Panc1 (cell line): ENCODE measurements at regions of chr10 and their contacts with region 1.

Region 1: DNA sequence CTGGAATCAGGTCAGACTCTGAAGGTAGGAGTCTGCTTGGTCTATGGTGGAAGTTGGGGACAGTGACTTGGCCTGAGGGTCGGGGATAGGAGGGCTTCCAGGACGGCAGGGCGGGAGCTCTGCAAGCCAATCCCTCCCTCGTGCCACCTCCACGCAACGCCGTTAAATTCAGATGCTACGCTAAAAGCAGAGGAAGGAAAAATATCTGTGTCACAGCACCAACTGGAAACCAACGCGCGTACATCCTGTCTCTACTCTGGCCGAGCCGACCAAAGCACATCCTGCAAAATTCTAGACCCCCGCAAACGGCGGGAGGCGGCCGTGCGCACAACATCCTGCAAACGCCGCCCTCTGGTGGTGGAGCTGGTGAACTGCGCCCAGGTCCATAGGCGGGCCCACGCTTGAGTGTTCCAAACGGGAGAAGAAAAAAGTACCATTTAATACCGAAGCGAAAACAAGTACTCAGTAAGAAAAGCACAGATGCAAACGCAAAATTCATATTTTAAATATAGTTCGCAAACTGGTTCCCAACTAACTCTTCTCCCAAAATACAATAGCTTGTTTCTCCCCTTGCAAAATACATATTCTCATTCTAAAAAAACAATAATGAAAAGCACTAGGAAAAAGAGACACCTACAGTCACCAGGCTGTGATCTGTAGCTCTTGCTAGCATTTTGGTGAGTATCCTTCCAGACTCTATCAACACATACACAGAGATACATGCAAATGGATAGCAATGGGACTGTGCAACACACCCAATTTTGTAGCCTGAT is 45.7 kb upstream of the HSPA12A start:
- DNase-seq: no peak
- ATAC-seq: peak; percentile 85
- H3K4me3 ChIP-seq: peak overlapping the region; percentile 28 to 45
- H3K27ac ChIP-seq: no peak overlapping the region
- H3K4me1 ChIP-seq: no peaks in the 10 kb centered on the region
- H3K27me3 ChIP-seq: no peaks in the 10 kb centered on the region
- CTCF ChIP-seq: peak; percentile 99

Region 2: DNA sequence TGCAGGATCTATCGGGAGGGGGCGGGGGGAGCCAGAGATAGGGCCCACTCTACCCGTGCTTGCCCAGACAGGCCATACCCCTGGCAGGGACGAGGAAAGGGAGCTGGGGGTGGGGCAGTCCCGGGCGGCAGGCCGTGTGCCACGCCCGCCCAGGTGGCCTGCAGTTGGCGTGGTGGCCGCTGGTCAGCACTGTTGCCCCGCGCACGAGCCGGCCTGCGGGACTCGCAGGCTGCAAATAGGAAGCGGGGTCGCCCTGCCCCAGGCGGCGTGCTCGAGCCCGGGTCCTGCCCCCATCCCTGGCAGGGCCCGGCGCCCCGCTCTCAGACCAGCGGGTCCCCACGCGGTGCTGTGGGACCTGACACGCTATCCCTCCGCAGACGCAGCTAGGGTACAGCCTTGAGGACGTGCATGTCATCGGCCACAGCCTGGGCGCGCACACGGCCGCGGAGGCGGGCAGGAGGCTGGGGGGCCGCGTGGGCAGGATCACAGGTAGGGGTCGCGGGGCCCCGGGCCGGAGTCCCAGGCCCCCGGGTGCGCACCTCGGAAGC is 160.6 kb before region 1 on chr10:
- CTCF ChIA-PET with region 1: interaction called, 16 read pairs
- POLR2A ChIA-PET with region 1: no interaction called
- in situ Hi-C with region 1: no loop called
- intact Hi-C with region 1: loop called (anchors 2 kb)
- DNase-seq: no peak
- ATAC-seq: peak; percentile 92
- H3K4me3 ChIP-seq: peak overlapping the region; percentile 21 to 25; a peak in 3 of 4 replicates
- H3K27ac ChIP-seq: no peak overlapping the region
- H3K4me1 ChIP-seq: no peaks in the 10 kb centered on the region
- H3K27me3 ChIP-seq: peaks cover 14% of the 10 kb centered on the region
- CTCF ChIP-seq: peak; percentile 95

Region 3: GRCh38 chr10:116690356-116691322 is 97.4 kb before region 1 on chr10:
- CTCF ChIA-PET with region 1: interaction called, 11 read pairs
- POLR2A ChIA-PET with region 1: no interaction called
- in situ Hi-C with region 1: no loop called
- intact Hi-C with region 1: no loop called
- DNase-seq: no peak
- ATAC-seq: peak; percentile 54
- H3K4me3 ChIP-seq: no peak overlapping the region
- H3K27ac ChIP-seq: no peak overlapping the region
- H3K4me1 ChIP-seq: no peaks in the 10 kb centered on the region
- H3K27me3 ChIP-seq: no peaks in the 10 kb centered on the region
- CTCF ChIP-seq: peak; percentile 64

Region 4: DNA sequence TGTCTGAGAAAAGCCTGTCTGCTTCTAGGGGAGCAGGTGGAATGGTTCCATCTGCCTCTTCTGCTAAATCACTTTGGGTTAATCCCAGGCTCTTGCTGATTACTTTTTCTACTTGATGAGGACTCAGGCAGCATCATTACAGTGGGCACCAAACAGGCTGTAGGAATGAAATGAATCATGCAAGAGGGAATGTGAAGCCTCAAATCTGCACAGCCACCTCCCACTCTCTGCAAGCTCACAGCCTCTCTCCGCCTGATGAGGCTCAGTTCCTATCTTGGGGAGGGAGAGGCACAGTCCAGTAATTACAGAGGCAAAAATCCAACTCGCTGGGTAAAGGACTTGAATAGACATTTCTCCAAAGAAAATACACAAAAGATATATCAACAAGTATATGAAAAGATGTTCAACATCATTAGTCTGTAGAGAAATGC is 79.7 kb before region 1 on chr10:
- CTCF ChIA-PET with region 1: no interaction called
- POLR2A ChIA-PET with region 1: no interaction called
- in situ Hi-C with region 1: no loop called
- intact Hi-C with region 1: no loop called
- DNase-seq: no peak
- ATAC-seq: no peak
- H3K4me3 ChIP-seq: no peak overlapping the region
- H3K27ac ChIP-seq: no peak overlapping the region
- H3K4me1 ChIP-seq: no peaks in the 10 kb centered on the region
- H3K27me3 ChIP-seq: no peaks in the 10 kb centered on the region
- CTCF ChIP-seq: no peak

Region 5: DNA sequence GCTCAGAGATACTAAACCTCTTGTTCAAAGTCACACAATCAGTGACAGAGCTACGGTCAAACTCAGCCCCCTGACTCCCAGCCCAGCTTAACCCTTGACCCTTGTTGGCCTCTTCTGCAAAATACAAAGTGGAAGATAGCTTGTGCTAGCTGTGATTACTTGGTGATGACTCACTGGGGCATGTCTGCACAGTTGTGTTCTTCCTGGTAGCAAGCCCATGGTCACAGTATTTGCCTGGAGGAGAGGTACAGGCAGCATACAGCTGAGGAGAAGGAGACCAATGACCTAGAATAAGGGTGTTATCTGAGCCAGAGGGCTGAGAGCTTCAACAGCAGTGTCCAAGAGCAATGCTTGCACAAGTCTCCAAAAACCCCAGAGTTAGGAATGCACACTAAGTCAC is 40.0 kb before region 1 on chr10:
- CTCF ChIA-PET with region 1: interaction called, 11 read pairs
- POLR2A ChIA-PET with region 1: no interaction called
- in situ Hi-C with region 1: no loop called
- intact Hi-C with region 1: no loop called
- DNase-seq: no peak
- ATAC-seq: no peak
- H3K4me3 ChIP-seq: no peak overlapping the region
- H3K27ac ChIP-seq: no peak overlapping the region
- H3K4me1 ChIP-seq: peaks cover 4% of the 10 kb centered on the region; the same call in 1 of the 2 replicates
- H3K27me3 ChIP-seq: peaks cover 4% of the 10 kb centered on the region; the same call in 1 of the 2 replicates
- CTCF ChIP-seq: no peak

Region 6: GRCh38 chr10:116866987-116867595 is 79.0 kb after region 1 on chr10:
- CTCF ChIA-PET with region 1: no interaction called
- POLR2A ChIA-PET with region 1: no interaction called
- in situ Hi-C with region 1: no loop called
- intact Hi-C with region 1: no loop called
- DNase-seq: no peak
- ATAC-seq: no peak
- H3K4me3 ChIP-seq: no peak overlapping the region
- H3K27ac ChIP-seq: no peak overlapping the region
- H3K4me1 ChIP-seq: no peaks in the 10 kb centered on the region
- H3K27me3 ChIP-seq: no peaks in the 10 kb centered on the region
- CTCF ChIP-seq: no peak